Activated B cell treated with CpG ODN at 0.5 μM for 24 hours (primary cell): ENCODE measurements at regions of chr20 and their contacts with region 1.

Region 1: DNA sequence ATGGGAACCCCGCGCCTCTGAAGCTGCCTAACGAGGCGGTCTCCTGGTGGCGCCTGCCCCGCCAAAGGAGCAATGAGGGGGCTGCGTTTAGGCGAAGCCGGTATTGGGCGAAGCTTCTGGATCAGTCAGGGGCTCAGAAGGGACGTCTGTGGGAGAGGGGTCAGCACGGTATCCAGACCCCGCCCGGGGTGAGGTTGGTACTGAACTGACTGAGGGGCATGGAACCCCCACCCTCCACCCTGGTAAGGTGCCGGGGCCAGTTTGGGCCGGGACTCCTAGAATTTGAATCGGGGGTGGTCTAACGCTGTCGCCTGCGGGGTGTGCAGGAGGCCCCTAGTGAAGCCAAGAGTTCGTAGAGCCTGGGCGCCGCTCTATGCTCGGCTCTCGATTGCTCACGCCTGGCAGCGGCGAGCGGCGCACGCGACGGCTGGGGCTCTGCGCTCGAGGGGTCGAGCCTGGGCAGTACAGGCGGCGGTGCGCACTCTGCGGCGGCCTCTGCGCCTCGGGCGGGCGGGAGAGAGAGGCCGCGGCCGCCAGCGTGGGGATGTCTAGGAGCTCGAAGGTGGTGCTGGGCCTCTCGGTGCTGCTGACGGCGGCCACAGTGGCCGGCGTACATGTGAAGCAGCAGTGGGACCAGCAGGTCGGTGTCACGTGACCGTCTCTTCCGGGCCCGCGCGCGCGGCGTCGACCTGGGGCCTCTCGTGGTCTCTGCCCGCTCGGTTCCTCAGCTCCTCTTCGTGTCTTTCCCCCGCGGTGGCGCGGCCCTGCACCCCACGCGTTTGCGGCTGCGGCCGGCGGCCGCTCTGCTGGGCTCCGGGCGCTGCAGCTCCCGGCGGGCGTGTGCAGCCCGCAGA is at the starts of genes KAT14 and PET117:
- DNase-seq: peak; percentile 96
- ATAC-seq: peak; percentile 91
- H3K4me3 Mint-ChIP-seq: peak within 1 kb of the TSS; percentile 90
- H3K27ac Mint-ChIP-seq: peak within 1 kb of the TSS; percentile 87
- H3K4me1 Mint-ChIP-seq: peaks cover 23% of the 10 kb centered on the region
- H3K27me3 Mint-ChIP-seq: no peaks in the 10 kb centered on the region
- CTCF ChIP-seq: no peak
- total RNA-seq, gene KAT14: 14.9 and 15.6 TPM in 2 replicates
- total RNA-seq, gene PET117: 10.1 and 13.6 TPM in 2 replicates

Region 2: DNA sequence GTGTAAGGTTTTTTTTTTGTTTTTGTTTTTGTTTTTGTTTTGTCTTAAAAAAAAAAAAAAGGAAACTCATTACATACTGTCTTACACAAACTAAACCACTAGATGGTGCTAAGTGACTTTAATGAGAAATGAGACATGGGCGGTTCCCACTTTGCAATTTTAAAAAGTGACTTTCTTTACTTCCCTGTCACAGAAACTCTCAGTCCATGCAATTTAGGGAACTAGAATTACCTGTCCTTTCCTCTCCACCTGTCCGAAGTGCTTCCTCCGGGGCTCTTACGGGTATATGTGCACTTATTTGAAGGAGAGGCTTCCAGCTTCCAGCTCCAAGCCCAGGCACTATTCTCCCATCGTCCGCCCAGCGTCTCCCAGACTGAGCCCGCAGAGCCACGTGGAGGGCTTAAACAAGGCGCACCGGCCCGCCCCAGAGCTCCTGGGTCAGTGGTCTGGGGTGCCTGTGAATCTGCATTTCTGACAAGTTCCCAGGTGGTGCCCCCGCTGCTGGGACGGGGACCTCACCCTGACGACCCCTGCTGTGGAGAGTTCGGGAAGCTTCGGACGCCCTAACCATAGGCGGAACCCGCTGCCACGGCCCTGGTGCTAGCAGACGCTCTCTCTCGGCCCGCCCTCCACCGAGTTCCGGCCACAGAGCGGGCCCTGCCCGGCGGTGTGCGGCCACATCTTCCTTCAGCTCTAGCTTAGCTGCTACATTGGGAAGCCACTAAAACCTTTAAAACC is 632.6 kb before region 1 on chr20:
- CTCF ChIA-PET with region 1: no interaction called
- POLR2A ChIA-PET with region 1: no interaction called
- intact Hi-C with region 1: loop called (anchors 5 kb)
- DNase-seq: peak; percentile 51
- ATAC-seq: peak; percentile 84
- H3K4me3 Mint-ChIP-seq: peak overlapping the region; percentile 91
- H3K27ac Mint-ChIP-seq: peak overlapping the region; percentile 85
- H3K4me1 Mint-ChIP-seq: peaks cover 9% of the 10 kb centered on the region
- H3K27me3 Mint-ChIP-seq: peaks cover 12% of the 10 kb centered on the region
- CTCF ChIP-seq: peak; percentile 56

Region 3: DNA sequence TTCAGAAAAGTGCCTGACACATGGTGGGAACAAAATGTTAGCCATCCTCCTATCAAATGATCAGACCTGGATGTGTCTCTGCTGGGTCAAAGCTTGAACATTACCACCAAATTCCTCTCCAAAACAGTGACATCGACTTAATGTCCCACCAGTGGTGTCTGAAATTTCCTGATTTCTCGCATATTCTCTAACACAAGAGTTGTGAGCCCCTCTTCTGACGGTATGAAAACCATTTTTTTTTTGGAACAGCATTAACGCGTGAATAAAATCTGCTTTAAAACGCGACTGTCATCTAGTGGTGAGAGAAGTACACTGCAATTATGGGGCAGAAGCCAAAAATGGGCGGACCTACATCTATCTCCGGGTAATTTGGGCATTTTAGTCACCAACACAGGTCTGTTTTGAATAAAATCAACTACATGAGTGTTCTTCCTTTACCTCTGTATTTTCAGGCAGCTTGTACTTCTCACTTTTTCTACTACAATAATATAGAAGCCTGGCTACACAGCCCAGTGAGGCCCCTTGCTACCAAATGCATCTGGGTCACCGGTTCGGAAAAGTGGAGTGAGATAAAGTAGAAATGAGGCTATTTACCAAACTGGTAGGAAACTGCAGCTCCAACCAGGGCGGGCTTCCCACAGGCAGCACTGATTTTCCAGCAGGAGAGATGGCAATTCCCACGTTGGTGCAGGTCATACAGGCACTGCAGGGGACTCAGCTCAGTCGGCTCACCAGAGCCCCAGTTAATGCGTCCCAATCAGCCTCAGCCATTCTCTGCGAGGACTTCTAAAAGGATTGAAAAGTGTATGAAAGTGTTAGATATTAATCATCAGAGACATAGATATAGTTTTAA is 141.4 kb before region 1 on chr20:
- CTCF ChIA-PET with region 1: no interaction called
- POLR2A ChIA-PET with region 1: interaction called, 3 read pairs
- intact Hi-C with region 1: loop called (anchors 2 kb)
- DNase-seq: no peak
- ATAC-seq: peak; percentile 91
- H3K4me3 Mint-ChIP-seq: no peak overlapping the region
- H3K27ac Mint-ChIP-seq: peak overlapping the region; percentile 20
- H3K4me1 Mint-ChIP-seq: peaks cover 29% of the 10 kb centered on the region
- H3K27me3 Mint-ChIP-seq: no peaks in the 10 kb centered on the region
- CTCF ChIP-seq: peak; percentile 89

Region 4: DNA sequence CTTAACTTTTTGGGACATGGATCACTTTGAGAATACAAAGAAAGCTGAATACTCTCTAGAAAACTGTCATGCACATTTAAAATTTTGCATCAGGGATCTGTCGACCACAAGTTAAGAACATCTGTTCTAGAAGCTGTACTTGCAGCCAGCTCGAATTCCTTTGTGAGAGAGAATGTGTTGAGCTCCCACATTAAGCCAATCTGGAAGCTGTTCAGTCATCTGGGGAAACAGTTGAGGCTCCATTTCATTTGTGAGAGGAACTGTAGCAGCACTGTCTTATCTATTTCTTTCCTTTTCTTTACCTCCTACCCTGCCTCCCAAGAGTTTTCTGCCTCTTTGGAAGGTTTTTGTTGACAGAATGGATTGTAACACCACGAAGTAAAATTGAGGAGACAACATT is 50.8 kb after region 1 on chr20:
- CTCF ChIA-PET with region 1: no interaction called
- POLR2A ChIA-PET with region 1: no interaction called
- intact Hi-C with region 1: no loop called
- DNase-seq: no peak
- ATAC-seq: no peak
- H3K4me3 Mint-ChIP-seq: no peak overlapping the region
- H3K27ac Mint-ChIP-seq: no peak overlapping the region
- H3K4me1 Mint-ChIP-seq: no peaks in the 10 kb centered on the region
- H3K27me3 Mint-ChIP-seq: no peaks in the 10 kb centered on the region
- CTCF ChIP-seq: no peak

Region 5: DNA sequence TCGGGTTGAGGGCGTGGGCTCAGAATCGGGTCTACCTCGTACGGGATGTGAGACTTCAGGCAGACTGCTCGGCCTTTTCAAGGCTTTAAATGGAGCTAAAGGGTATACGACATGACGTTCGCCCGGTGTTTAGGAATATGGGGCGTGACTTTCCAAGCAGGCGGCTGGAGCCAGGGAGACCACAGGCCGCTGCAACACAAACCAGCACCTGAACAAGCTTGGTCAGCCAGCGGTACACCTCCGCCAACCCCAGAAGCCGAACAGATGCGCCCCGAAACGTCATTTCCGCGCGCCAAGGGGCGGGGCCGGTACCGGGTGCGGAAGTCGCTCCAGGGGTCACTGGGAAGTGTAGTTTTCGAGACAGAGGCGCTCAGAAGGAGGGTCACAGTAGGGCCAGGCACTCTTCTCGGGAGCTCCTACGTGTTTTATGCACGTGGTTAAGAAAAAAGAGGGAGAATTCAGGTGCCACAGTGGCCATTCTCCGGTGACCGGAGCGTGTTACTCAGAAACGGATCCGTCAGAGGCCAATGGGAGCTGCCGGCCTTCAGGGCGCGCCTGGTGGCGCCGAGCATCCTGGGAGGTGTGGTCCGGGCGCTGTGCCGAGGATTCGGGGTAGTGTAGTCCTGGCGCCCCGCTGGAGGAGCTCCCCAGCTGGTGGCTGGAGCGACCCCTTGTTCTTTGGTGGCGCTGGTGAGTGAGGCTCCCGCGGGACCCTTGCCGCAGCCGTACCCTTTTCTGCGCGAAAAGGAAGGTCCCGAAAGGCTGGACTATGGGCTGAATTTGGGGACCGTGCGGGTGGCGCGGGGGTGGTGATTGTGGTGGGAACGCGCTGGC is 150.5 kb after region 1 on chr20 and contains the start of gene ZNF133:
- CTCF ChIA-PET with region 1: no interaction called
- POLR2A ChIA-PET with region 1: interaction called, 17 read pairs
- intact Hi-C with region 1: loop called (anchors 1 kb)
- DNase-seq: peak; percentile 99
- ATAC-seq: peak; percentile 96
- H3K4me3 Mint-ChIP-seq: peak within 1 kb of the TSS; percentile 92
- H3K27ac Mint-ChIP-seq: peak within 1 kb of the TSS; percentile 97
- H3K4me1 Mint-ChIP-seq: peaks cover 29% of the 10 kb centered on the region
- H3K27me3 Mint-ChIP-seq: peaks cover 16% of the 10 kb centered on the region
- CTCF ChIP-seq: no peak
- total RNA-seq, gene ZNF133: 7.7 and 8.0 TPM in 2 replicates

Region 6: DNA sequence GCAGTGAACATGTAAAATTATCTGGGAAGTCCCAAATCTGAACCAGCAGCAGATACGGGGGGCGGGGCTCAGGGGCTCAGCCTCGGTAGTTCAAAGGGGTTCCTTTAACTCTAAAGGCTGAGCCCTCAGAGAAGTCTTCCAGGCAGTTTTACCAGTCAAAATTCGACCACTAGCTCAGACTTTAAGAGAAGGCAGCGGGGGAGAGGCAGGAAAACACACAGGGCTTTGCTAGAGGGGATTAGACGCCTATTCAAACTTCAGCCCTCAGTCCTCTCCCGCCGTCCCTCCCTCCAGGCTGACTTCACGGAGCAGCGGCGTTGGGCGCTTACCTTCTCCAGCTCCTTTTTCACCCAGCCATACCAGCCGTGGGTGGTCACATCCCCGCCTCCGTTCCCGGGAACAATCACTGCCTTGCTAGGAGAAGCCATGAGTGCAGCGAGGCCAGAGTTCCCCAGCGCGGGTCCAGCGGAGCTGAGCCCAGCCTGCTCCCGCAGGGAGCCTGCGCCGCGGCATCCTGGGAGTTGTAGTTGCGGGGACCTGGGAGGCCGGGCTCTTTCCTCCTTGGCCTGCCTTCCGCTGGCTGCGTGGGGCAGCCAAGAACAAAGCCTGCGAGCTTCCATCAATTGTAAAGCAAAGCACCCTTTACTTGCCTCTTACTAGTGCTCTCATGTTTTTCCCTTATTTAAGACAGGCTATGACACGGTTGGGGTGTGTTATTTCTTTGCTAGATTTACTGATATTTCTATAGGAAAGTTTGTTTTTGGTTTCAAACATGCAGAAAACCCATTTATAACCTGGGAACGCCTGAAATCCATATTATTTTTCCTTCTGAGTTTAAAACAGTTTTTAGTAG is 359.3 kb after region 1 on chr20 and contains the start of gene RBBP9:
- CTCF ChIA-PET with region 1: no interaction called
- POLR2A ChIA-PET with region 1: interaction called, 5 read pairs
- intact Hi-C with region 1: loop called (anchors 2 kb)
- DNase-seq: peak; percentile 67
- ATAC-seq: peak; percentile 99
- H3K4me3 Mint-ChIP-seq: peak within 1 kb of the TSS; percentile 99
- H3K27ac Mint-ChIP-seq: peak within 1 kb of the TSS; percentile 87
- H3K4me1 Mint-ChIP-seq: peaks cover 16% of the 10 kb centered on the region
- H3K27me3 Mint-ChIP-seq: peaks cover 3% of the 10 kb centered on the region
- CTCF ChIP-seq: no peak
- total RNA-seq, gene RBBP9: 10.6 TPM in 2 replicates

Region 7: GRCh38 chr20:18793625-18794427 is 656.2 kb after region 1 on chr20:
- CTCF ChIA-PET with region 1: no interaction called
- POLR2A ChIA-PET with region 1: no interaction called
- intact Hi-C with region 1: loop called (anchors 1 kb)
- DNase-seq: peak; percentile 73
- ATAC-seq: peak; percentile 92
- H3K4me3 Mint-ChIP-seq: peak overlapping the region; percentile 93
- H3K27ac Mint-ChIP-seq: peak overlapping the region; percentile 97
- H3K4me1 Mint-ChIP-seq: peaks cover 18% of the 10 kb centered on the region
- H3K27me3 Mint-ChIP-seq: peaks cover 11% of the 10 kb centered on the region
- CTCF ChIP-seq: no peak

Region 8: DNA sequence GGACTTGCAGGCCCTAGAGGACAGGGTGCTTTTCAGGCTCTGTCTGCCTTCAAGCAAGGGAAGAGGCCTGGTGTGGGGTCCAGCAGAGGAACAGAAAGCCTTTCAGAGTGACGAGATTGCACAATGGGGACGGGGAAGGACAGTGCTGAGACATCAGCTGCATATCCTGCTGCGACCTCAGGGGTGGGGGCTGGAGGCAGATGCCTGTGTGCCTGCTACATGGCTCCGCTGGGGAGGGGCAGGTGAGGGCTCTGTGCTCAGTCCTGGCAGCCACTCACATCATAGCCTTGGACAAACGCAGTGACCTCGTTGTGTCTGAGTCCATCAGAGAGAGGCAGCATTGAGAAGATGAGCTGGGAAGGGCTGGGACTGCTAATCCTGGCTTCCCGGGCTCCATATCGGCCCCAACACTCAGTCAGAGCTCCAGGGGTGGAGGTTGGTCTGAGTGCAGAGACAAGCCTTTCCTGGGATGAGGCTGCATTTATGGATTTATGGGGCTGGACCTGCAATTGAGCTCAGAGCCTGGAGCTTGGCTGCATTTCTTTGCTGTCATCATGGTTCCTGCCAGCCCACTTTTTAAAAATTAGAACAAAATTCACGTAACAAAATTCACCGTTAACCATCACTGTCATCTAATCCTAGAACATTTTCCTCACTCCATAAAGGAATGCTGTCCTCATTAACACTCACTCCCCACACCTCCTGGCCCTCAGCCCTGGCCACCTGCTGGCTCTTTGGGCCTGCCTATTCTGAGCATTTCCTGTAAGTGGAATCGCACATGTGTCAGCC is 877.9 kb after region 1 on chr20:
- CTCF ChIA-PET with region 1: no interaction called
- POLR2A ChIA-PET with region 1: no interaction called
- intact Hi-C with region 1: no loop called
- DNase-seq: no peak
- ATAC-seq: no peak
- H3K4me3 Mint-ChIP-seq: no peak overlapping the region
- H3K27ac Mint-ChIP-seq: no peak overlapping the region
- H3K4me1 Mint-ChIP-seq: no peaks in the 10 kb centered on the region
- H3K27me3 Mint-ChIP-seq: no peaks in the 10 kb centered on the region
- CTCF ChIP-seq: no peak